ENCODE measurements at regions of chr5 and their contacts with region 1.

Region 1: DNA sequence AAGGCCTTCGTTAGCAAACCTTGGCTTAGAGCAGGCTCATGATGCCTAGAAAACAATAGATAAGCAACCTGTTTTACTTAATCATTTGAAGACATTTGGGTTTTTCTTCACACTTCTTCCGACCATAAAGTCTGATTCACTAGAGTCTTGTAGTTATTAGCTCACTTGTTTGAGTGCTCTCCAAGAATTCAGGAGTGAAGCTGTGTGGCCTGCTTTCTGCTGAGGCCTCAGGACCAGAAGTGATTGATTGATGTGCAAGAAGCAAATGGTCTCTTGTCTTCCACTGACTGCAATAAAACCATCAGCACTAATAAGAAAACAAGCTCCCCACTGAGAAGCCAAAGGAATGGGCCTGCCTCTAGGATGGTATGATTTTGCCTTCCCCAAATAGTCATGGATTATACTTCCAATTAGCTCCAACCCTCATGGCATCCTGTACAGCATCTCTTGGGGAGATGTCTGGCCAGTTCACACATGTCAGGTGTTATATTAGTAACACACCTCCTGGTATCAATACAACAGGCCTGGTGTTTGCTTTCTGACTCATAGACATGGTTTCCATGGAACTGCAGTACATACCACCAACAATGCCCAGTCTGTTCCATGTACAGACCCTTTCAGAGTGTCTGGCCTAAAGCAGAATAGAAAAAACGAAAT is 317.6 kb downstream of the CWC27 start:
- DNase-seq: no peak
- ATAC-seq: no peak
- H3K4me3 ChIP-seq: no peak overlapping the region
- H3K4me3 Mint-ChIP-seq: no peak overlapping the region
- H3K27ac ChIP-seq: no peak overlapping the region
- H3K27ac Mint-ChIP-seq: no peak overlapping the region
- H3K4me1 ChIP-seq: no peaks in the 10 kb centered on the region
- H3K4me1 Mint-ChIP-seq: no peaks in the 10 kb centered on the region
- H3K27me3 ChIP-seq: no peaks in the 10 kb centered on the region
- H3K27me3 Mint-ChIP-seq: peaks cover 8% of the 10 kb centered on the region in 2 donors

Region 2: DNA sequence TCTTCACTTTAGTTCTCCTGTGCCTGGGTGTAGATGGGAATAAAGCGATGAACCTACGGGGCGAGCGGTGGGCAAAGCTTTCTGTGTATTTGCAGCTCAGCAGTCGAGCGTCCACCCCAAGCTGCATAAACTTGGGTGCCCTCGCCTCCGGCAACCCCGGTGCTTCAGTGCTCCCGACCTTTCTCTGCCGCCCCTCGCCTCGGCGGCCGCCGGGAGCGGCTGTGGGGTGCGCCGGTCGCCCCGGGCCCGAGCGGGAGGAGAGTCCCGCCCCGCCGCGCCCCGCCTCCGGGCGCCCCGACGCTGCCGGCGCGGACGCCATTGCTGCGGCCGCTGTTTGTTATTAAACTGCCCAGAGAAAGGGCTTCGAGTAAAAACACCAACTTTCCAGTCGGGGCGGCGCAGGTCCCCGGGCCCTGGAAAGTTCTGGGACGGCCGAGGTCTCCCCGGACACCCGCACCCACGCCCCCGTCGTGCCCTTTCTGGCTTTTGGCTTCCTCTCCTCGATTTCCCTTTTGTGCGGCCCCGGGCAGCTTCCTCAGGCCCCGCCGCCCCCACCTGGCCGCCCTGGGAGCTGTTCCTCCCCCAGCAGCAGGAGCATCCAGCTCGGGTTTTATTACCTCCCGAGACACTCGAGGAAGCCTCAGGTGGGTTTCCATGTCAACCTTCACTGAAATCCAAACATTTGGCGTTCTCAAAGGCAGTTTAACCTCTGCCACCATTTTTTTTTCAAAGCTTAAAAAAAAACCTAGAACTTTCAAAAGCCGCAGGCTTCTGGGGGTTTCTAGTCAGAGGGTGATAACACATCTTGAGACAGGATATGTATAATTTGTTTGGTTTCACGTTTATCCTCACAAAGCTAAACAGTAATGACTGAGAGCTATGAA is 16.7 kb after region 1 on chr5:
- CTCF ChIA-PET with region 1: no interaction called
- POLR2A ChIA-PET with region 1: interaction called in 1 of 2 experiments, 12 read pairs
- DNase-seq: peak; percentile 15 to 76 (median 36)
- ATAC-seq: peak; percentile 76 to 84 (median 81)
- H3K4me3 ChIP-seq: peak overlapping the region; percentile 58 to 79
- H3K4me3 Mint-ChIP-seq: peak overlapping the region; percentile 72 to 85 (median 84)
- H3K27ac ChIP-seq: peak overlapping the region; percentile 83
- H3K27ac Mint-ChIP-seq: peak overlapping the region; percentile 80 to 97
- H3K4me1 ChIP-seq: peaks cover 18 to 19% of the 10 kb centered on the region in 2 experiments
- H3K4me1 Mint-ChIP-seq: peaks cover 39 to 51% (median 41%) of the 10 kb centered on the region in 3 donors
- H3K27me3 ChIP-seq: no peaks in the 10 kb centered on the region
- H3K27me3 Mint-ChIP-seq: no peaks in the 10 kb centered on the region

Region 3: GRCh38 chr5:65440456-65440855 is 354.1 kb after region 1 on chr5:
- CTCF ChIA-PET with region 1: no interaction called
- POLR2A ChIA-PET with region 1: no interaction called
- DNase-seq: no peak
- ATAC-seq: no peak
- H3K4me3 ChIP-seq: no peak overlapping the region
- H3K4me3 Mint-ChIP-seq: no peak overlapping the region
- H3K27ac ChIP-seq: no peak overlapping the region
- H3K27ac Mint-ChIP-seq: no peak overlapping the region
- H3K4me1 ChIP-seq: no peaks in the 10 kb centered on the region
- H3K4me1 Mint-ChIP-seq: no peaks in the 10 kb centered on the region
- H3K27me3 ChIP-seq: no peaks in the 10 kb centered on the region
- H3K27me3 Mint-ChIP-seq: peaks cover 0 to 2% of the 10 kb centered on the region in 2 donors